ENCODE measurements at regions of chr1 and their contacts with region 1.

Region 1: GRCh38 chr1:240967070-240967724 is 355.2 kb upstream of the GREM2 start:
- DNase-seq: peak in 1 of 2 experiments; percentile 18
- H3K4me3 ChIP-seq: no peak overlapping the region
- H3K4me3 Mint-ChIP-seq: no peak overlapping the region
- H3K27ac Mint-ChIP-seq: no peak overlapping the region
- H3K4me1 ChIP-seq: no peaks in the 10 kb centered on the region
- H3K4me1 Mint-ChIP-seq: no peaks in the 10 kb centered on the region
- H3K27me3 ChIP-seq: no peaks in the 10 kb centered on the region
- H3K27me3 Mint-ChIP-seq: no peaks in the 10 kb centered on the region
- CTCF ChIP-seq: peak; percentile 40 to 47

Region 2: GRCh38 chr1:241229216-241229615 is 262.0 kb after region 1 on chr1:
- CTCF ChIA-PET with region 1: interaction called, 5 read pairs
- POLR2A ChIA-PET with region 1: no interaction called
- intact Hi-C with region 1: loop called (anchors 5 kb)
- DNase-seq: no peak
- H3K4me3 ChIP-seq: no peak overlapping the region
- H3K4me3 Mint-ChIP-seq: no peak overlapping the region
- H3K27ac Mint-ChIP-seq: no peak overlapping the region
- H3K4me1 ChIP-seq: no peaks in the 10 kb centered on the region
- H3K4me1 Mint-ChIP-seq: no peaks in the 10 kb centered on the region
- H3K27me3 ChIP-seq: no peaks in the 10 kb centered on the region
- H3K27me3 Mint-ChIP-seq: no peaks in the 10 kb centered on the region
- CTCF ChIP-seq: no peak

Region 3: DNA sequence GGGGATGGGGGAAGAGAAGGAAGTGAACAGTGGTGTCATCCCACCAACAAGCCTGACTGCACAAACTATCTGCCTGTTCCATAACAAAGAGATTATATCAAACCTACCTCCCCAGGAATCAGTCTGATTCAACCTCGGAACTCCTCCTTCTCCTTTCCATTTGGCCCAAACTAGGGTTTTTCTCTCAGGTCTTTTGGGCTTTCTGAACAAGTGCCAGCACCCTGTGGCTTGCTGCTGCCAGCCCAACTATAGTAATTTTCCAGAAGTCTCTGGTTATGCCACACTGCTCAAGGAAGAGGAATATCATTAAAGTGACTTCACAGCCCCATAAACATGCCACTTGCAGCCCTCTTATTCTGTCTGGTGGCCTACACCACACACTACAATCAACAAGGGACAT is 319.3 kb after region 1 on chr1:
- CTCF ChIA-PET with region 1: no interaction called
- POLR2A ChIA-PET with region 1: no interaction called
- intact Hi-C with region 1: loop called (anchors 1 kb)
- DNase-seq: no peak
- H3K4me3 ChIP-seq: no peak overlapping the region
- H3K4me3 Mint-ChIP-seq: no peak overlapping the region
- H3K27ac Mint-ChIP-seq: no peak overlapping the region
- H3K4me1 ChIP-seq: no peaks in the 10 kb centered on the region
- H3K4me1 Mint-ChIP-seq: no peaks in the 10 kb centered on the region
- H3K27me3 ChIP-seq: no peaks in the 10 kb centered on the region; the same call in 1 of the 2 replicates
- H3K27me3 Mint-ChIP-seq: no peaks in the 10 kb centered on the region
- CTCF ChIP-seq: no peak

Region 4: GRCh38 chr1:241408170-241408569 is 441.0 kb after region 1 on chr1:
- CTCF ChIA-PET with region 1: no interaction called
- POLR2A ChIA-PET with region 1: no interaction called
- intact Hi-C with region 1: loop called (anchors 1 kb)
- DNase-seq: peak in 1 of 2 experiments; percentile 4
- H3K4me3 ChIP-seq: no peak overlapping the region
- H3K4me3 Mint-ChIP-seq: no peak overlapping the region
- H3K27ac Mint-ChIP-seq: no peak overlapping the region
- H3K4me1 ChIP-seq: no peaks in the 10 kb centered on the region
- H3K4me1 Mint-ChIP-seq: no peaks in the 10 kb centered on the region
- H3K27me3 ChIP-seq: no peaks in the 10 kb centered on the region
- H3K27me3 Mint-ChIP-seq: peaks cover 6% of the 10 kb centered on the region
- CTCF ChIP-seq: peak; percentile 18 to 28

Region 5: DNA sequence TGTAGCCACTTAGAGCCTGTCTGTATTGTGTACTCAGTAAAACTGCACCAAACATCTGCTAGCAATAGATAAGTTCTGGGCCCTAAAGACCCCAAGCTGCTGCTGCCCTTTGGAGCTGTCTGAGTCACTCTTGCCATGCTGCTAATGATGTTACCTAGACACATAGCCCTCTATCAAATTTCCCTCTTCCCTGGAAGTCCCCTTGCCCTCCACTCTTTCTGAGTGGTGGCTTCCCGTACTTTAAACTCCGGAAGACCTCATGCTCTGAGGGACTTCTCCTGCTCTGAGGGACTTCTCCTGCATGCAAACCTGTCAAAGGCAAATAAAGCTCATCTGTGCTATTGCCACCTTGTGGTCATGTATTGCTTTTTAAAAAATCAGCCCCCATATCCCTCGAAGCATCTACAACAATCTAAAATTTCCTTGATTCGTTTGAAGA is 518.4 kb after region 1 on chr1:
- CTCF ChIA-PET with region 1: interaction called, 4 read pairs
- POLR2A ChIA-PET with region 1: no interaction called
- intact Hi-C with region 1: loop called (anchors 1 kb)
- DNase-seq: peak in 1 of 2 experiments; percentile 13
- H3K4me3 ChIP-seq: no peak overlapping the region
- H3K4me3 Mint-ChIP-seq: no peak overlapping the region
- H3K27ac Mint-ChIP-seq: no peak overlapping the region
- H3K4me1 ChIP-seq: no peaks in the 10 kb centered on the region
- H3K4me1 Mint-ChIP-seq: no peaks in the 10 kb centered on the region
- H3K27me3 ChIP-seq: no peaks in the 10 kb centered on the region
- H3K27me3 Mint-ChIP-seq: no peaks in the 10 kb centered on the region
- CTCF ChIP-seq: peak; percentile 40 to 63

Region 6: GRCh38 chr1:241499910-241500309 is 532.7 kb after region 1 on chr1:
- CTCF ChIA-PET with region 1: no interaction called
- POLR2A ChIA-PET with region 1: no interaction called
- intact Hi-C with region 1: loop called (anchors 1 kb)
- DNase-seq: no peak
- H3K4me3 ChIP-seq: no peak overlapping the region
- H3K4me3 Mint-ChIP-seq: no peak overlapping the region
- H3K27ac Mint-ChIP-seq: no peak overlapping the region
- H3K4me1 ChIP-seq: no peaks in the 10 kb centered on the region
- H3K4me1 Mint-ChIP-seq: no peaks in the 10 kb centered on the region
- H3K27me3 ChIP-seq: no peaks in the 10 kb centered on the region
- H3K27me3 Mint-ChIP-seq: no peaks in the 10 kb centered on the region
- CTCF ChIP-seq: peak; percentile 34 to 44

Measured in Caco-2 (cell line).